ENCODE measurements at regions of chr1 and their contacts with region 1.

Region 1: DNA sequence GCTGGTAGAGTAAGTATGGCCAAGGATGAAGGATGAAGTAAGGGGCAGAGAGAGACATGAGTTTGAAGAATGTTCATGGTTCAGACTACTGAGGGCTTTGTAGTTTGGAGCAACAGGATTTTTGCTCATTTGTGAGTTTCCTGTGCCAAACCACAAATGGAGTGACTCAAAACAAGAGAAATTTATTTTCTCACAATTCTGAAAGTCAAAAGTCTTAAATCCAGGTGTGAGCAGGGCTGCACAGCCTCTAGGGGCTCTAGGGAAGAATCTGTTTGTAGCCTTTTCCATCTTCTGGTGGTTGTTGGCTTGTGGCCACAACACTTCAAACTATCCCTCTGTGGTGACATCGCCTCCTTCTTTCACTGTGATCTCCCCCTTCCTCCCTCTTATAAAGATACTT is 58.9 kb downstream of the RHOU start:
- DNase-seq: peak; percentile 40
- ATAC-seq: peak; percentile 75
- H3K4me3 ChIP-seq: no peak overlapping the region
- H3K27ac ChIP-seq: no peak overlapping the region
- H3K4me1 ChIP-seq: peaks cover 7% of the 10 kb centered on the region
- H3K27me3 ChIP-seq: peaks cover 0 to 2% of the 10 kb centered on the region in 2 experiments; a peak in 1 of 4 replicates
- CTCF ChIP-seq: no peak
- EP300 ChIP-seq: no peak
- POLR2A ChIP-seq: no peak
- RAD21 ChIP-seq: no peak

Region 2: DNA sequence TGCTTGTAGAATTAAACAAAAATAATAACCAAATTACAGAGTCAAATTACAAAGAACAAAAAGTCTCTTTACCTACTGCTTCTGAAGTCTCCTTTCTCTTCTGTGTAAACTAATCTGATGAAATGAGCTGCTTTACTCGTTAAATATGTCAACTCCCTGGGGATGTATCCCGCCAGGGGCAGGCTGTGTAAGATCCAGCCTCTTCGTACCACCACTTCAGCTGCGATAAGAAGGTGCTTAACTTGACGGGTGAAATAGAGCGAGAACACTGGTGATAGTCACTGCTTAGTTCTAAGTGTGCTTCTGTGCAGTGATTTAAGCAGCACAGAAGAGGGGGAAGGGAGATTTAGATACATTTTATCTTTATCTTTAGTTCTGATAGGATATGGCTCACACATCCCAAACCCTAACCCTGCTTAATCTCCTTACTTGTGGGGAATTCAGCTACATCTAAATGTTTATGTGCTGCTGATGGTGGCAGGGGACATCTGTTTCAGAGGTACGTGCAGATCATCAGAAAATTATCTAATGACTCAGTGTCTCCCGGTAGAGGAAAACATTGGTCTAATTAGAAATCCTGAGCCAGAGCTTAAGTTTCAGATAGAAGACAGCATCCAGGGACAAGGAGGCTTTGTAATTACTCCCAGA is 12.9 kb before region 1 on chr1:
- CTCF ChIA-PET with region 1: no interaction called
- POLR2A ChIA-PET with region 1: no interaction called
- RAD21 ChIA-PET with region 1: no interaction called
- SMC1A ChIA-PET with region 1: no interaction called
- in situ Hi-C with region 1: no loop called
- intact Hi-C with region 1: no loop called
- DNase-seq: no peak
- ATAC-seq: no peak
- H3K4me3 ChIP-seq: no peak overlapping the region
- H3K27ac ChIP-seq: no peak overlapping the region
- H3K4me1 ChIP-seq: no peaks in the 10 kb centered on the region
- H3K27me3 ChIP-seq: peaks cover 0 to 1% of the 10 kb centered on the region in 2 experiments; a peak in 1 of 4 replicates
- CTCF ChIP-seq: no peak
- EP300 ChIP-seq: no peak
- POLR2A ChIP-seq: no peak
- RAD21 ChIP-seq: no peak

Region 3: GRCh38 chr1:228830954-228831481 is 36.8 kb after region 1 on chr1:
- CTCF ChIA-PET with region 1: no interaction called
- POLR2A ChIA-PET with region 1: no interaction called
- RAD21 ChIA-PET with region 1: interaction called, 3 read pairs
- SMC1A ChIA-PET with region 1: interaction called, 3 read pairs
- in situ Hi-C with region 1: no loop called
- intact Hi-C with region 1: loop called (anchors 2 kb)
- DNase-seq: peak; percentile 46
- ATAC-seq: peak; percentile 87
- H3K4me3 ChIP-seq: no peak overlapping the region
- H3K27ac ChIP-seq: no peak overlapping the region
- H3K4me1 ChIP-seq: peaks cover 4% of the 10 kb centered on the region
- H3K27me3 ChIP-seq: 0 out of 4 replicates have a peak, but pooled peaks cover 1 to 5% of the 10 kb centered on the region in 2 experiments
- CTCF ChIP-seq: no peak
- EP300 ChIP-seq: peak; percentile 65 to 82; a peak in 2 of 4 replicates
- POLR2A ChIP-seq: no peak
- RAD21 ChIP-seq: no peak